SK-N-SH (cell line): ENCODE measurements at regions of chr5 and their contacts with region 1.

Region 1: GRCh38 chr5:134140530-134141201 is 26.2 kb downstream of the TCF7 start:
- DNase-seq: peak; percentile 80
- H3K4me3 ChIP-seq: no peak overlapping the region
- H3K27ac ChIP-seq: peak overlapping the region in 1 of 2 experiments; percentile 71; a peak in 2 of 4 replicates
- H3K4me1 ChIP-seq: peaks cover 11 to 21% of the 10 kb centered on the region in 2 experiments; a peak in 3 of 4 replicates
- H3K27me3 ChIP-seq: no peaks in the 10 kb centered on the region
- CTCF ChIP-seq: peak; percentile 79
- EP300 ChIP-seq: no peak
- RAD21 ChIP-seq: peak; percentile 75

Region 2: GRCh38 chr5:134034326-134034725 is 106.3 kb before region 1 on chr5:
- CTCF ChIA-PET with region 1: interaction called, 673 read pairs
- POLR2A ChIA-PET with region 1: interaction called, 9 read pairs
- DNase-seq: no peak
- H3K4me3 ChIP-seq: no peak overlapping the region
- H3K27ac ChIP-seq: no peak overlapping the region
- H3K4me1 ChIP-seq: peaks cover 0 to 3% of the 10 kb centered on the region in 2 experiments; a peak in 1 of 4 replicates
- H3K27me3 ChIP-seq: no peaks in the 10 kb centered on the region
- CTCF ChIP-seq: no peak
- EP300 ChIP-seq: no peak
- RAD21 ChIP-seq: no peak

Region 3: GRCh38 chr5:134070725-134071613 is 69.7 kb before region 1 on chr5:
- CTCF ChIA-PET with region 1: interaction called, 16 read pairs
- POLR2A ChIA-PET with region 1: no interaction called
- DNase-seq: no peak
- H3K4me3 ChIP-seq: no peak overlapping the region
- H3K27ac ChIP-seq: no peak overlapping the region
- H3K4me1 ChIP-seq: peaks cover 0 to 4% of the 10 kb centered on the region in 2 experiments; a peak in 1 of 4 replicates
- H3K27me3 ChIP-seq: no peaks in the 10 kb centered on the region
- CTCF ChIP-seq: no peak
- EP300 ChIP-seq: no peak
- RAD21 ChIP-seq: no peak

Region 4: DNA sequence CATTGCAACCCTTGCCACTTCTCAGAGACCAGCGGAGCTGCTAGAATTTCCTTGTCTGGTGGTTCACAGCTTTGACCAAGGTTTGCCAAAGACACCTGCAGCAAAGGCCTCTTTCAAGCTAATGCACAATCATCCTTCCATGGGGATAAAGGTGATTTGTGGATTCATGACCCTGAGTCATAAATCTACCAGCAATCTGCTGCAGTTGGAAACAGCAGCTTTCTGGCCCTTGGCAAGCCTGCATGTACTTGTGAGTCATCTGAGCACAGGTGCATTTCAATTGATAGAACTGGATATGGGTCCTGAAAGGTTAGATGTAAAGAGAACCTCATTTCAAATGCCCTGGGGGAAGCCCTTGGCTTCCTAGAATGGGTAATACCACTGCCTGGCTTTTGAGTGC is 47.8 kb before region 1 on chr5:
- CTCF ChIA-PET with region 1: no interaction called
- POLR2A ChIA-PET with region 1: no interaction called
- DNase-seq: no peak
- H3K4me3 ChIP-seq: no peak overlapping the region
- H3K27ac ChIP-seq: peak overlapping the region in 1 of 2 experiments; percentile 73; a peak in 1 of 4 replicates
- H3K4me1 ChIP-seq: peaks cover 0 to 62% of the 10 kb centered on the region in 2 experiments; a peak in 1 of 4 replicates
- H3K27me3 ChIP-seq: no peaks in the 10 kb centered on the region
- CTCF ChIP-seq: no peak
- EP300 ChIP-seq: no peak
- RAD21 ChIP-seq: no peak

Region 5: DNA sequence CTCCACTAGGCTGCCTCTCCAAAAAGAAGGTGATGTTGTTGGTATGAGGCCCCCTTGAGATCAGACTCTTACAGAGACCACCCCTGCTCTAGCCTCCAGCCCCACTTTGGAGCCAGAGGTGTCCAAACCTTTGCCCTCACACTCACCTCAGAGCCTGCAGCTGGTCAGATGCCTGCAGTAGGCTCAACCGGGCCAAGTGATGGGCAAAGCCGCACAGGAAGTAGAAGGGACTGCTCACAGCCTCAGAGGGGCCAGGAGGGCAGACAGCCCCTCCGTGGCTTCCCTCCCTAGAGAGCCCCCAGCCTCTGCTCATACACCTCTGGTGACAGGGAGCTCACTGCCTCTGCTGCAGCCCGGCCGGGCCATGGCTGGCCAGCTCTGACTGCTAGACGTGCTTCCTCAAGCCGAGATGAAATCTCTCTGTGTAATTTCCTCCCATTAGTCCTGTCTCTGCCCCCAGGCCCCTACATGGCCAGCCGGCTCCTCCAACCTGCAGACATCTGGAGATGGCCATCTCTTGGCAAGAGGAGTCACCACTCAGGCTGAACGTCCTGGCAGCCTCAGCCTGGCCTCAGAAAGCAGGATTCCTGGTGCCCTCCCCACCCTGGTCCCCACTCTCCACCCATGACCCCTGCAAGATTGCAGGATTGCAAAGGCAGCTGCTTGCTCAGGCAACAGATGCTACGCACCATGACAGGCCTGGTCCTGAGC is 33.5 kb before region 1 on chr5:
- CTCF ChIA-PET with region 1: no interaction called
- POLR2A ChIA-PET with region 1: interaction called, 15 read pairs
- DNase-seq: peak; percentile 93
- H3K4me3 ChIP-seq: peak overlapping the region in 1 of 2 experiments; percentile 29; a peak in 1 of 4 replicates
- H3K27ac ChIP-seq: peak overlapping the region in 1 of 2 experiments; percentile 100; a peak in 2 of 4 replicates
- H3K4me1 ChIP-seq: peaks cover 0 to 84% of the 10 kb centered on the region in 2 experiments; a peak in 2 of 4 replicates
- H3K27me3 ChIP-seq: no peaks in the 10 kb centered on the region
- CTCF ChIP-seq: no peak
- EP300 ChIP-seq: peak; percentile 19 to 99; a peak in 3 of 4 replicates
- RAD21 ChIP-seq: peak; percentile 31; the same call in 1 of the 2 replicates

Region 6: GRCh38 chr5:134119720-134120119 is 20.9 kb before region 1 on chr5:
- CTCF ChIA-PET with region 1: interaction called, 152 read pairs
- POLR2A ChIA-PET with region 1: no interaction called
- DNase-seq: no peak
- H3K4me3 ChIP-seq: no peak overlapping the region
- H3K27ac ChIP-seq: no peak overlapping the region; a peak in 1 of 4 replicates
- H3K4me1 ChIP-seq: peaks cover 2 to 55% of the 10 kb centered on the region in 2 experiments; a peak in 3 of 4 replicates
- H3K27me3 ChIP-seq: no peaks in the 10 kb centered on the region
- CTCF ChIP-seq: no peak
- EP300 ChIP-seq: no peak
- RAD21 ChIP-seq: no peak

Region 7: DNA sequence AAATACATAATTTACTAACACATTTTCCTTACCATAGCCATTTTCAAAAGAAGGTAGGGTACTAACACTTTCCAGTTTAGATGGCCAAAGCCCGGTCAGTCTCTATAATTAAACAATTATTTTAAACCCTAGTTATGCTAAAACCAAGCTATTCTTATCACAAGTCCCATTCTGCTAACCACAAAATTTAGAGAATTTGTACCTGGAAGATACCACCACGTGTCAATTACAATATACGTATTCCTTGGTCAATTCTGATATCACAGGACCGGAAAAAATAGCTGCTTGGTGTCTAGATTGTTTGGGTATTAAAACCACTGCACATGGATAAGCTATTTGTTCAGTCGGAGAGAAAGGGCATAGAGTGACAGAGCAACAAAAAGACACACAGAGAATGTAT is 55.0 kb after region 1 on chr5:
- CTCF ChIA-PET with region 1: no interaction called
- POLR2A ChIA-PET with region 1: no interaction called
- DNase-seq: no peak
- H3K4me3 ChIP-seq: no peak overlapping the region
- H3K27ac ChIP-seq: no peak overlapping the region
- H3K4me1 ChIP-seq: no peaks in the 10 kb centered on the region
- H3K27me3 ChIP-seq: no peaks in the 10 kb centered on the region
- CTCF ChIP-seq: no peak
- EP300 ChIP-seq: no peak
- RAD21 ChIP-seq: no peak